Heart right ventricle (tissue), 16 donors: ENCODE measurements at regions of chr9 and their contacts with region 1.

Region 1: DNA sequence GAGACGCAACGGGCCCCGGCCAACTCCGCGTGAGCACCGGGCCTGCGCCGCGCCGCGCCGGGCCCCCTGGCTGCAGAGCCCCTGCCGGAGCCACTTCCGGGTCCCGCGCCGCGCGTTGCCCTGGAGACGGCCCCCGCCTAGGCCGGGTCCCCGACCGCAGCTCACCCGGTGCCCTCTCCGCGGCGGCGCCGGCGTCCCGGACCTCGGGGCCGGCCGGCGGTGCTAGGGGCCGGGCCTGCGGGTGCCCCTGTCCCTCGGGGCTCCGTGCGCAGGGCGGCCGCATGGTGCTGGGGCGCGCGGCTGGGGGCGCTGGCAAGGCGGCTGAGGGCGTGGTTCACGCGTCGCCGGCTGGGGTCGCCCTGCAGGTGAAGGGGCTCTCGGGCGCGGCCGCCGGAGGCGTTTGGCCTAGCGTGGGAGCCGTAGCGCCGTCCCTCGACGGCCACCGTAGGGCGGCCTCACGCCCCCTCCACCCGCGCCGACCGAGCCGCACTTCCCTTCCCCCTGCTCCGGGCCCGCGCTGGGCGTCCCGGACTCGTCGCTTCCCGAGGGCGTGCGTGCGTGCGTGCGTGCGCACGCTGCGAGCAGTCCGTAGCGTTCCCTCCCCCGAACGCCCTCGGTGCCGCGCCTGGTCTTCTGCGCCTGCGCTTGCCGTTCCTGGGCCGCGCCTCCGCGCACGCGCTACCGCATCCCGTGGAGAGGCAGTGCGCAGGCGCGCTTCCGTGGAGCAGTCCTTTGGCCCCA is at the start of gene TMEM250:
- DNase-seq: peak; percentile 95 to 99
- ATAC-seq: peak; percentile 90 to 95 (median 92)
- H3K4me3 ChIP-seq: peak within 1 kb of the TSS; percentile 52 to 90 (median 74)
- H3K27ac ChIP-seq: peak within 1 kb of the TSS; percentile 81 to 99 (median 97)
- H3K4me1 ChIP-seq: peaks cover 6 to 42% (median 34%) of the 10 kb centered on the region in 9 donors
- H3K27me3 ChIP-seq: no peaks in the 10 kb centered on the region
- CTCF ChIP-seq: peak in 4 of 9 donors; percentile 12 to 27 (median 22)
- total RNA-seq, gene TMEM250: 12.7 to 24.3 (median 15.4) TPM

Region 2: DNA sequence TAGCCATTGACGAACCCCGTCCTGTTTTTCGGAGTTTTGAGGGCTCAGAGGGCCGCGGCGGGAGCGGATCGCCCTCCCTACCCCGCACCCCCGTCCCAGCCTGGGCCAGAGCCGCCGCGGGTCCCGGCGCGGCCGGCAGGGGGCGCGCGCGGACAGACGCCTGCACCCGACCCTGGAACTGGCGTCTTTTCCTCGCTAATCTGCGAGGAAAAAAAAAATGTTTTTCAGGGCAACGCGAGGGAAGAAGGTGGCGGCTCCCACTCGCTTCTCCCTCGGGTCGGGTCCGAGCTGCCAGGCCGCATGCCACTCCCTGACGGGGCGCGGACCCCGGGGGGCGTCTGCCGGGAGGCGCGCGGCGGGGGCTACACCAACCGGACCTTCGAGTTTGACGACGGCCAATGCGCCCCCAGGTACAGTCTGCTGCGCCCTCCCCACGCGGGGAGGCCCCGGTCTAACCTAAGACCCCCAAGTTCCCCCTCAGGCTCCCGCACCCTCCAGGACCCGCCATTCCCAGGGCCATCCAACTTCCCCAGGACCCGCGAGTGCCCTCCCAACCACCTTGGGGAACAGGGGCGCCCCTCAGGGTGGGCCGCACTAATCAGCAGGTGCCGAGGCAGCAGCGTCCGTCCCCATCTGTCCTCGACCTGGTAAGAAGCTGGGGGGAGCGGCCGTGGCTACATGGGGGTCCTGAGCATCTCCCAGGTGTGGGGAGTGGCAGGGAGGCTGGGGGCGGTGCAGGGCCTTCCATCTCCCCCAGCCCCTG is 416.4 kb before region 1 on chr9 and contains the start of gene KCNT1:
- intact Hi-C with region 1: loop called in 2 of 10 experiments (anchors 10 kb)
- DNase-seq: peak; percentile 16 to 60
- ATAC-seq: peak in 3 of 8 donors; percentile 44 to 62 (median 54)
- H3K4me3 ChIP-seq: peak within 1 kb of the TSS in 7 of 10 donors; percentile 7 to 38 (median 20)
- H3K27ac ChIP-seq: no peak within 1 kb of the TSS
- H3K4me1 ChIP-seq: peaks cover 0 to 28% (median 11%) of the 10 kb centered on the region in 9 donors
- H3K27me3 ChIP-seq: peaks cover 5 to 50% (median 43%) of the 10 kb centered on the region in 7 donors
- CTCF ChIP-seq: peak; percentile 75 to 96 (median 92)
- total RNA-seq, gene KCNT1: 1.9 to 14.1 (median 4.8) TPM

Region 3: GRCh38 chr9:135857371-135857786 is 261.1 kb before region 1 on chr9:
- intact Hi-C with region 1: loop called in 5 of 10 experiments (anchors 5 to 10 kb)
- DNase-seq: no peak
- ATAC-seq: no peak
- H3K4me3 ChIP-seq: no peak overlapping the region
- H3K27ac ChIP-seq: no peak overlapping the region
- H3K4me1 ChIP-seq: no peaks in the 10 kb centered on the region
- H3K27me3 ChIP-seq: no peaks in the 10 kb centered on the region
- CTCF ChIP-seq: no peak

Region 4: GRCh38 chr9:135907431-135908092 is 210.9 kb before region 1 on chr9 and contains the start of gene CAMSAP1:
- intact Hi-C with region 1: loop called in 1 of 10 experiments (anchors 5 kb)
- DNase-seq: peak; percentile 92 to 96
- ATAC-seq: peak; percentile 96 to 99 (median 98)
- H3K4me3 ChIP-seq: peak within 1 kb of the TSS; percentile 68 to 89 (median 86)
- H3K27ac ChIP-seq: peak within 1 kb of the TSS; percentile 74 to 94 (median 92)
- H3K4me1 ChIP-seq: peaks cover 4 to 58% (median 49%) of the 10 kb centered on the region in 9 donors
- H3K27me3 ChIP-seq: no peaks in the 10 kb centered on the region
- CTCF ChIP-seq: no peak
- total RNA-seq, gene CAMSAP1: 15.6 to 25.0 (median 20.6) TPM

Region 5: GRCh38 chr9:135971892-135972291 is 146.6 kb before region 1 on chr9:
- intact Hi-C with region 1: loop called in 9 of 10 experiments (anchors 1 to 2 kb)
- DNase-seq: no peak
- ATAC-seq: no peak
- H3K4me3 ChIP-seq: no peak overlapping the region
- H3K27ac ChIP-seq: no peak overlapping the region
- H3K4me1 ChIP-seq: peaks cover 6 to 38% (median 26%) of the 10 kb centered on the region in 9 donors
- H3K27me3 ChIP-seq: peaks cover 0 to 3% (median 0%) of the 10 kb centered on the region in 7 donors
- CTCF ChIP-seq: no peak

Region 6: GRCh38 chr9:135992486-135993408 is 125.7 kb before region 1 on chr9:
- intact Hi-C with region 1: no loop called
- DNase-seq: peak; percentile 85 to 91
- ATAC-seq: peak; percentile 86 to 95 (median 92)
- H3K4me3 ChIP-seq: peak overlapping the region in 9 of 10 donors; percentile 3 to 49 (median 33)
- H3K27ac ChIP-seq: peak overlapping the region; percentile 86 to 96 (median 93)
- H3K4me1 ChIP-seq: peaks cover 13 to 64% (median 40%) of the 10 kb centered on the region in 9 donors
- H3K27me3 ChIP-seq: peaks cover 0 to 15% (median 0%) of the 10 kb centered on the region in 7 donors
- CTCF ChIP-seq: peak in 2 of 9 donors; percentile 19 to 20